Left ventricle myocardium inferior (tissue), 1 donor: ENCODE measurements at regions of chr16 and their contacts with region 1.

Region 1: DNA sequence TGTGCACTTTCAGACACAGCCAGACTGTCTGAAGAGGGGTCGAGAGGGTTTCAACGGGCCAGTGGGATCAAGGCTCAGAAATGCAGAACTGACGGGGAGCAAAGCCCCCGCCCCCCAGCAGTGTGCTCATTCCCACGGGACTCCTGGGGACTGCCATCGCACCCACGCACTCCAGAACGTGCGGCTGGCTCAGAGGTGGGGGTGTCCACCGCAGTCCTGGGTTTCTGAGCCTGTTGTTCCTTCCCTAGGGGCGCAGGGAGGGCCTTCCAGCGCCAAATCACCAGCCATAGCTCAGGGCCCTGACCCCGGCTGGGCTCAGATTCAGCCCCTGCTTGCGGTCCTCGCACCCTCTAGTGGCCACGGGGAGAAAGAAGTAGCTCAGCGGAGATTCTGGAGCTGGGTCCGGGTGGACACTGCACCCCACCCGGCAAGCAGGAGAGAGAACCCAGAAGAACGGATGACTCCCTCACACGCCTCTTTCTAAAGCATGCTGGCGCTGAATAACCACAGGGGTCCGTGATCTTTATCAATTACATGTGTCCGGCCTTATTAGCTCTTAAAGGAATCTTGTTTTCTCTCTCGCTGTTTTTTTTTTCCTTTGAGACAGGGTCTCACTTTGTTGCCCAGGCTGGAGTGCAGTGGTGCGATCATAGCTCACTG is 45.0 kb upstream of the USP7 start:
- DNase-seq: peak; percentile 70
- H3K4me3 ChIP-seq: peak overlapping the region; percentile 54
- H3K27ac ChIP-seq: no peak overlapping the region
- H3K4me1 ChIP-seq: peaks cover 7% of the 10 kb centered on the region
- H3K27me3 ChIP-seq: peaks cover 22% of the 10 kb centered on the region
- CTCF ChIP-seq: peak; percentile 90

Region 2: DNA sequence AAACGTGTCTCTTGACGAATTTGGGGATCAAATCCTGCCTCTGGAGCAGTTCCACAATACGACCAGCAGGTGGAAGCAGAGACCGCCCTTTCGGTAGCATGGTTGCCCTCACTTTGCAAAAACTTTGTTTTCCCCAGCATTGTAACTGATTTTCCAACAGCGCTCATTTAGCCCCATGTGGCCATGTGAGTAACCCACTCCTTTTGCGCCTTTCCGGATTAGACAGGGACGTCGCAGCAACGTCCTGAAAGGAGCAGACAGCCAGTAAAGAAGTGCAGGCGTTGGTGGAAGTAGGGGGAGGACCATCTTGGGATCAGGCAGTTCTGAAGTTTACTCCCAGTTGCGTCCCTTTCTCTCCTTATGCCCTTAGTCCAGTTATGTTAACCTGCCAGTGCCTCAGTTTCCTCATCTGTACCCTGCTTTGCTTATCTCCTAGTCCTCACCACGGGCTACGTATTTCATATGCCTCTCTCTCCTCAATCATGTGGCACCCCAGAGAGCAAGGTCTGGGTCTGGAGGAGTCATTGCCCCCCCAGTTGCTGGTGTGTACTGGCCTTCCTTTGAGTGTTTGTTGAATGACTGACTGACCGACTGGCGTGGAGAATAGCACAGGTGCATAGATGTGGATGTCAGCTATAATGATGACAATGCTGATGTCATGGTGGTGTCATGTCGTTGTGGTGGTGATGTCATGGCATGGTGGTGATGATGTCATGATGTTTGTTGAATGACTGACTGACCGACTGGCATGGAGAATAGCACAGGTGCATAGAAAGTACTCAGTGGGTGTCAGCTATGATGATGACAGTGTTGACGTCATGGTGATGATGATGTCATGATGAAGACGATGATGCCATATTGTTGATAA is 440.7 kb before region 1 on chr16:
- intact Hi-C with region 1: loop called (anchors 10 kb)
- DNase-seq: peak; percentile 53
- H3K4me3 ChIP-seq: no peak overlapping the region
- H3K27ac ChIP-seq: no peak overlapping the region
- H3K4me1 ChIP-seq: peaks cover 19% of the 10 kb centered on the region
- H3K27me3 ChIP-seq: peaks cover 40% of the 10 kb centered on the region
- CTCF ChIP-seq: peak; percentile 98

Region 3: GRCh38 chr16:8951447-8952280 is 57.1 kb before region 1 on chr16:
- intact Hi-C with region 1: no loop called
- DNase-seq: no peak
- H3K4me3 ChIP-seq: no peak overlapping the region
- H3K27ac ChIP-seq: no peak overlapping the region
- H3K4me1 ChIP-seq: peaks cover 92% of the 10 kb centered on the region
- H3K27me3 ChIP-seq: no peaks in the 10 kb centered on the region
- CTCF ChIP-seq: no peak

Region 4: GRCh38 chr16:8963825-8964441 is 44.8 kb before region 1 on chr16 and contains the start of gene USP7:
- intact Hi-C with region 1: no loop called
- DNase-seq: peak; percentile 95
- H3K4me3 ChIP-seq: peak within 1 kb of the TSS; percentile 85
- H3K27ac ChIP-seq: peak within 1 kb of the TSS; percentile 88
- H3K4me1 ChIP-seq: peaks cover 46% of the 10 kb centered on the region
- H3K27me3 ChIP-seq: no peaks in the 10 kb centered on the region
- CTCF ChIP-seq: no peak
- total RNA-seq, gene USP7: 54.7 TPM

Region 5: DNA sequence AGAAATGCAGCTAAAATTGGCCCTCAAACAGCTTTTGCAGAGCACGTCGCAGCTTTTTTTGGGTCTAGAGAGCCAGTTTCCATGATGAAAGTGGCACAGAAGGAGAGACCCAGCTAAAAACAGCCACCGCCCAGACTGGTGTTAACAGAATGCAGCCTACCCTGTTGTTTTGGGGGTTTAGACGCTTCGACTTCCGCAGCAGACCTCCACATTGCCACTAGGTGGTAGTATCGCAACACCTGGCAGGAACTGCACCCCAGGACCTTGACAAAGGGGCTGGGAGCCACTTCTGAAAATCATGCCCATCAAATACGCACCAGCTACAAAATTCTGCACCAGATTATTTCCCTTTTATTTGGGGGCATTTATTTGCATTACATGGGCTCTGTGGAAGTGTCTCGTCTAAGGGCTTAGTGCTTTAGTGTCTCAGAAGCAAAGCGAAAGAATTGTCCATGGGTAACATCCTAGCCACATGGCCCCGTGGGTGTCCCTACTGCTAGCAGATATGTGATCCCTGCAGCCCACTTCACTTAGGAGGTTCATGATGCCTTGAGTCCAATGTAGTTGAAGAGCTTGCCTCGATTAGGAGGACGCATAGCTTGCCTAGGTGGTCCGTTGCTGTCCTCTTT is 249.8 kb after region 1 on chr16:
- intact Hi-C with region 1: no loop called
- DNase-seq: no peak
- H3K4me3 ChIP-seq: no peak overlapping the region
- H3K27ac ChIP-seq: no peak overlapping the region
- H3K4me1 ChIP-seq: peaks cover 16% of the 10 kb centered on the region
- H3K27me3 ChIP-seq: peaks cover 35% of the 10 kb centered on the region
- CTCF ChIP-seq: peak; percentile 79